ENCODE measurements at regions of chr6 and their contacts with region 1.

Region 1: DNA sequence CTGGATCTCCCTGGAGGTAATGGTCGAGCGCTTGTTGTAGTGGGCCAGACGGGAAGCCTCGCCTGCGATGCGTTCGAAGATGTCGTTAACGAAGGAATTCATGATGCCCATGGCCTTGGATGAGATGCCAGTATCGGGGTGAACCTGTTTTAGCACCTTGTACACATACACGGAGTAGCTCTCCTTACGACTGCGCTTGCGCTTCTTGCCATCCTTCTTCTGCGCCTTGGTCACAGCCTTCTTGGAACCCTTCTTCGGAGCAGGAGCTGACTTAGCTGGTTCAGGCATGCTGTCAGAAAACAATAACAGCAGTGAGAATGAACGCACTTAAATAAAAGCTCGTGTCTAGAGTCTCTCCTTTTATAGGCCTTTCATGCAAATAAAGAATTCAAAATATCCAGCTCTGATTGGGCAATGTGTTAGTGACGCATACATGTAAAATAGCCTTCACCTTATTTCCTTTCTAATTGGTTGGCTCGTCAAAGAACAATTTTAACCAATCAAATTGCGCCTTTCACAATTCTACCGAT is 129.2 kb downstream of the HFE start:
- DNase-seq: peak; percentile 77
- ATAC-seq: peak; percentile 75
- H3K4me3 Mint-ChIP-seq: no peak overlapping the region
- H3K27ac Mint-ChIP-seq: no peak overlapping the region
- H3K4me1 Mint-ChIP-seq: peaks cover 32% of the 10 kb centered on the region
- H3K27me3 Mint-ChIP-seq: no peaks in the 10 kb centered on the region

Region 2: DNA sequence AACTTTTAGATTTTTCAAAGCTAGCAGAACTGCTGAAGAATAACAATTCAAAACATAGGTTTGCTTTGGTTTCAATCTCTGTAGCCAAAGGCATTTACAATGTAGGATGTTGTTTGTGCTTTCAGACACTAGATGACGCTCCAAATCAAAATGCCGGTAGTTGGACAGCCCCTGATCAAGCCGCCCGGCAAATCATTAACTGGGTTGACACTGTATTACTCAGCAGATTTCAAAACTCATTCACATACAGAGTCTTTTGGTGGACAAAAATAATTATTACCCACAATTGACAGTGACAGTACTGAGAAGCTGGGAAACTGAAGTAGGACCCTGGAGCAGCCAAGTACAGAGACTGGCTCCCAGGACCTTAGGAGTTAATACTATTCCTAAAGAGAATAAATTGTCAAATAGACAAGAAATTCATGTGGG is 150.5 kb before region 1 on chr6:
- POLR2A ChIA-PET with region 1: no interaction called
- DNase-seq: no peak
- ATAC-seq: peak; percentile 89
- H3K4me3 Mint-ChIP-seq: no peak overlapping the region
- H3K27ac Mint-ChIP-seq: no peak overlapping the region
- H3K4me1 Mint-ChIP-seq: peaks cover 8% of the 10 kb centered on the region
- H3K27me3 Mint-ChIP-seq: peaks cover 26% of the 10 kb centered on the region

Region 3: GRCh38 chr6:26103770-26104456 is 112.5 kb before region 1 on chr6:
- POLR2A ChIA-PET with region 1: interaction called, 12 read pairs
- DNase-seq: peak; percentile 86
- ATAC-seq: peak; percentile 89
- H3K4me3 Mint-ChIP-seq: peak overlapping the region; percentile 93
- H3K27ac Mint-ChIP-seq: peak overlapping the region; percentile 100
- H3K4me1 Mint-ChIP-seq: peaks cover 18% of the 10 kb centered on the region
- H3K27me3 Mint-ChIP-seq: no peaks in the 10 kb centered on the region

Region 4: DNA sequence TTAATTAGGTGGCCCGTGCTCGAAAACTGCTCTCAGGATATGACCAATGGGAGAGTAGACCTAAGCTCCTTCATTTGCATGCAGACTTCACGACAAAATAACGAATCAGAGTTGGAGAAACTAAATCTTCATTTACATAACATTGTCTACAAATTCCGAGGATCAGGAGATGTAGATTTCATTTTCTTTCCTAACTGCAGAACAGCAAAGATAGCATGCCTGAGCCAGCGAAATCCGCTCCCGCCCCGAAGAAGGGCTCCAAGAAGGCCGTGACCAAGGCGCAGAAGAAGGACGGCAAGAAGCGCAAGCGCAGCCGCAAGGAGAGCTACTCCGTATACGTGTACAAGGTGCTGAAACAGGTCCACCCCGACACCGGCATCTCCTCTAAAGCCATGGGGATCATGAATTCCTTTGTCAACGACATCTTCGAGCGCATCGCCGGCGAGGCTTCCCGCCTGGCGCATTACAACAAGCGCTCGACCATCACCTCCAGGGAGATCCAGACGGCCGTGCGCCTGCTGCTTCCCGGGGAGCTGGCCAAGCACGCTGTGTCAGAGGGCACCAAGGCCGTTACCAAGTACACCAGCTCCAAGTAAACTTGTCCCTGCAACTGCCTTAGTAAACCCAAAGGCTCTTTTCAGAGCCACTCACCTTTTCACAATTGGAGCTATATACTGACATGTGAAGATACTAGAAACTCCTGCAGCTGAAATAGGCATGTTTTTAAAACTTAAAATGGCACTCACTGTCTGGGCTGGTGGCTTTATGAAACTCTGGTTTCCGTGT is 32.6 kb before region 1 on chr6:
- POLR2A ChIA-PET with region 1: interaction called, 1,314 read pairs
- DNase-seq: peak; percentile 78
- ATAC-seq: peak; percentile 85
- H3K4me3 Mint-ChIP-seq: peak overlapping the region; percentile 96
- H3K27ac Mint-ChIP-seq: peak overlapping the region; percentile 99
- H3K4me1 Mint-ChIP-seq: peaks cover 48% of the 10 kb centered on the region
- H3K27me3 Mint-ChIP-seq: no peaks in the 10 kb centered on the region

Region 5: DNA sequence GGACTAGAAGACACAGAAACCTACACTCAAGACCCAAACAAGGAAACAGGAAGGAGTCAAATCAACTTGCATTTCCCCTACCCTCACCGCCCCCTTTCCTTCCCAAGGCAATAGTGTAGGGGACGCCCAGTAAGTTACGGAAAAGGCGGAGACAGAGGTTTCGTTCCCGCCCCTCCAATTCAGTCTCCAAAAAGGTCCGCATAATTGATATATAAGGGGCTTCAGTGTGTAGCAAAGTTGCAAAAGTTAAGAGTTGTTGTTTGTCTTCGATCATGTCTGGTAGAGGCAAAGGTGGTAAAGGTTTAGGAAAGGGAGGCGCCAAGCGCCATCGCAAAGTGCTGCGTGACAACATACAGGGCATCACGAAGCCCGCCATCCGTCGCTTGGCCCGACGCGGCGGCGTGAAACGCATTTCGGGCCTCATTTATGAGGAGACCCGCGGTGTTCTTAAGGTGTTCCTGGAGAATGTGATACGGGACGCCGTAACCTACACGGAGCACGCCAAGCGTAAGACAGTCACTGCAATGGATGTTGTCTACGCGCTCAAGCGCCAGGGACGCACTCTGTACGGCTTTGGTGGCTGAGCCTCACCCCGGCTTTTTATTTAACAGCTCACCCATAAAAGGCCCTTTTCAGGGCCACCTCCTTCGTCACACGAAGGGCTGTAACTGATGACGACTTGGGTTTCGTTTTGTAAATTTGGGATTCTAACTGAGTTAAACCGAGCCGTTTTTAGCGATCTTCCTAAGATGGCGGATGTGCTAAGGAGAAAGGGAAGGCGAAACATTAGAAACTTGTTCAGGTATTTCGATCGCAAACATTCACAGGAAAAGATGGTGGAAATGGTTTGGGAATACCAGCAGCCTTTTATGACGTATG is 24.0 kb after region 1 on chr6:
- POLR2A ChIA-PET with region 1: interaction called, 425 read pairs
- DNase-seq: peak; percentile 81
- ATAC-seq: peak; percentile 82
- H3K4me3 Mint-ChIP-seq: peak overlapping the region; percentile 85
- H3K27ac Mint-ChIP-seq: peak overlapping the region; percentile 98
- H3K4me1 Mint-ChIP-seq: peaks cover 36% of the 10 kb centered on the region
- H3K27me3 Mint-ChIP-seq: no peaks in the 10 kb centered on the region

Region 6: DNA sequence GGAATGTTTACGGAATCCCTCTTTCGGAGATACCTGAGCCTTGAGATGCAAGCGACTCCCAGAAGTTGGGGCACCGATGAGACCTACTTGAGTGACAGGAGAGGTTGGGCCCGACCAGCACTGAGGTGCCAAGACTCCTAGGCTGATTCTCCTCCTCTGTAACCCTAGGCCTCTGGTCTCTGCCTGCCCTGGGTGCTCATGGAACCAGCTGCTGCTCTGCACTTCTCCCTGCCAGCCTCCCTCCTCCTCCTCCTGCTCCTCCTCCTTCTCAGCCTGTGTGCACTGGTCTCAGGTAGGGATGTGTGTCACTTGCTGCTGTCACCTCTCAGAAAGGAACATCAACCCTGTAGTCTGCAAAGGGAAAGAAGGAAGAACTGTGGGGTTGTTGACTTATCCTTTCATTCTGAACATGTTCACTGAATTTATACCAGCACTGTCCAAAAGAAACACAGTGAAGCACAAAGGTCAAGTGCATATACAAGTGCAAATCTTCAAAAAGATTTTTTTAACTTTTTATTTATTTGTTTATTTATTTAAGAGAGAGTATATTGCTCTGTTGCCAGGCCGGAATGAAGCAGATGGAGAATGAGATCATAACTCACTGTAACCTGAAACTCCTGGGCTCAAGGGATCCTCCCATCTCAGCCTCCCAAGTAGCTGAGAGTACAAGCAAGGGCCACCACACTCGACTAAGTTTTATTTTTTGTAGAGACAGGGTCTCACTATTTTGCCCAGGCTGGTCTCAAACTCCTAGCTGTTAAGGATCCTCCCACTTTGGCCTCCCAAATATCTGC is 167.4 kb after region 1 on chr6:
- POLR2A ChIA-PET with region 1: no interaction called
- DNase-seq: no peak
- ATAC-seq: peak; percentile 37
- H3K4me3 Mint-ChIP-seq: peak overlapping the region; percentile 100
- H3K27ac Mint-ChIP-seq: peak overlapping the region; percentile 98
- H3K4me1 Mint-ChIP-seq: peaks cover 24% of the 10 kb centered on the region
- H3K27me3 Mint-ChIP-seq: no peaks in the 10 kb centered on the region

Region 7: GRCh38 chr6:27864906-27865849 is 1648.8 kb after region 1 on chr6:
- POLR2A ChIA-PET with region 1: interaction called, 28 read pairs
- DNase-seq: peak; percentile 83
- ATAC-seq: peak; percentile 56
- H3K4me3 Mint-ChIP-seq: peak overlapping the region; percentile 99
- H3K27ac Mint-ChIP-seq: peak overlapping the region; percentile 100
- H3K4me1 Mint-ChIP-seq: peaks cover 57% of the 10 kb centered on the region
- H3K27me3 Mint-ChIP-seq: no peaks in the 10 kb centered on the region

Region 8: GRCh38 chr6:27962506-27962905 is 1746.1 kb after region 1 on chr6:
- POLR2A ChIA-PET with region 1: no interaction called
- DNase-seq: no peak
- ATAC-seq: no peak
- H3K4me3 Mint-ChIP-seq: no peak overlapping the region
- H3K27ac Mint-ChIP-seq: no peak overlapping the region
- H3K4me1 Mint-ChIP-seq: no peaks in the 10 kb centered on the region
- H3K27me3 Mint-ChIP-seq: peaks cover 16% of the 10 kb centered on the region

Measured in activated naive CD8-positive, alpha-beta T cell treated with anti-CD3 and anti-CD28 coated beads, Interleukin-2, amount 10 ng/mL, durations not matched to agents 7 days and 5 days (primary cell).